Mammary epithelial cell (primary cell): ENCODE measurements at regions of chr19 and their contacts with region 1.

Region 1: DNA sequence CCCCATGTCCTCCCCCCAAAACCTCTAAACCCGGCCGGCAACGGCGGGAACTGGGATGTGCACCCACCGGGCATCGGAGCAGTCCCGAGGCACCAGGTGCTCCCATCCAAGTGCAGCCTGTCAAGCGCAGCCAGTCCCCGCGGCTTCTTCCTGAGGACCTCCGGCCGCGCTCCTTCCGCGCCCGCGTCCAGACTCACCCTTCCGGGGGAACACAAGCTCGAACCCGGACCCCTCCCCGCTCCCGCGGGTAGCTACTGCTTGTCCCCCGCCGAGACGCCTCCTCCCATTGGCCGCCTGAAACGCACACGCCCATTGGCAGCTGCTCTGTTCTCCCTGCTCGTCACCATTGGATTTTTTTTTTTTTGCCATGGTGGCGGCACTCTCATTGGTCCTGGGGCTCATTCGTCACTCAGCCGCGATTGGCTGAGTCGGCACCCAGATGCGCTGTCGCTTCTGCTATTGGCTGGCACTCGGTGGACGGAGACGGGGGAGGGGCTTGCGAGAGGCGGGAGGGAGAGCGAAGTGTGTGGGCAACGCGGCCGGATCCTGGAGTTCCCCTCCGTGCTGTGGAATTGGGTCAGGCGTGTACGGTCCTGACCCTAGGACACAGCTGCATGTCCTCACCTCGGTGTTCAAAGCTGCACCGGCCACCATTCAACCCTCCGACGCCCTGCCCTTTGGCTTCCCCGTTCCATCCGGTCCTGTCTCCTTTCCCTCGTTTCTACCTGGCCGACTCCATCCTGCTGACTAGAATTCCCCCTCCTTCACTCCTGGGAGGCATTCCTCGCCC is at the start of gene TYK2:
- DNase-seq: peak; percentile 99
- H3K4me3 ChIP-seq: peak within 1 kb of the TSS; percentile 81 to 99 (median 92)
- H3K27ac ChIP-seq: peak within 1 kb of the TSS; percentile 65
- H3K4me1 ChIP-seq: peaks cover 11% of the 10 kb centered on the region
- H3K27me3 ChIP-seq: no peaks in the 10 kb centered on the region
- CTCF ChIP-seq: no peak
- total RNA-seq, gene TYK2: 43.5 to 110 TPM

Region 2: DNA sequence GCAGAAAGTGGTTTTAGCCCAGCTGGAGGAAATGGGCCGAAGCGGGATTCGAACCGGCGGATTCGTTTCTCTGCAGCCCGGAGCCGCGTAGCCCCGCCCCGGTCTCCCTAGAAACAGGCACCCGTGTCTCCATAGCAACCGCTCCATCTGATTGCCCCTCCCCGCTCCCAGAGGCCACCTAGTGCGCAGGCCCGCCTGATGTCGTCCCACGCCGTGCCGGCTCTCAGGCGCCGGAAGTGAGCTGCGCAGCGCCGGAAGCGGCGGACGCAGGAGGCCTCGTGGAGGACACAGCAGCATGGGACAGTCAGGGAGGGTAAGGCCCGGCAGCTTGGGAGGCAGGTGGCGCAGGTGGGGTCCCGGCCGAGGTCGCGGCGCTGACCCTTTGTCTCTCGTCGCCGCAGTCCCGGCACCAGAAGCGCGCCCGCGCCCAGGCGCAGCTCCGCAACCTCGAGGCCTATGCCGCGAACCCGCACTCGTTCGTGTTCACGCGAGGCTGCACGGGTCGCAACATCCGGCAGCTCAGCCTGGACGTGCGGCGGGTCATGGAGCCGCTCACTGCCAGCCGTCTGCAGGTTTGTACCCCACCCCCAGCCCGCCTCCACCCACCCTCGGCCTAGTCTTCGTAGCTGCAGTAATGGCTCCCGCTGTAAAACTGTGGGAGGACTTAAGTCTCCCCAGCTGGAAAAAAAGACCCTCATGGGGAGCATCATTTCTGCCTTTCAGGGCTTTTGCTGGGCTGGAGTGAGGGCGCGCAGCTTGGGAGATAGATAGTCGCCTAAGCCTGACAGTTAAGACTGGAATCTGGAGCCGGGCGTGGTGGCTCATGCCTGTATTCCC is 274.2 kb before region 1 on chr19 and contains the start of gene PPAN:
- CTCF ChIA-PET with region 1: no interaction called
- dilution Hi-C with region 1: no loop called
- in situ Hi-C with region 1: no loop called
- intact Hi-C with region 1: loop called (anchors 10 kb)
- DNase-seq: peak; percentile 96
- H3K4me3 ChIP-seq: peak within 1 kb of the TSS; percentile 87 to 97 (median 88)
- H3K27ac ChIP-seq: peak within 1 kb of the TSS; percentile 73
- H3K4me1 ChIP-seq: peaks cover 14% of the 10 kb centered on the region
- H3K27me3 ChIP-seq: no peaks in the 10 kb centered on the region
- CTCF ChIP-seq: no peak
- total RNA-seq, gene PPAN: 26.8 to 72.6 TPM